ENCODE measurements at regions of chr19 and their contacts with region 1.

Region 1: GRCh38 chr19:29596885-29597525 is 9.1 kb upstream of the POP4 start:
- DNase-seq: no peak
- ATAC-seq: no peak
- H3K4me3 Mint-ChIP-seq: no peak overlapping the region
- H3K27ac Mint-ChIP-seq: no peak overlapping the region
- H3K4me1 Mint-ChIP-seq: peaks cover 2% of the 10 kb centered on the region
- H3K27me3 Mint-ChIP-seq: peaks cover 6% of the 10 kb centered on the region

Region 2: GRCh38 chr19:28823338-28823961 is 773.6 kb before region 1 on chr19:
- CTCF ChIA-PET with region 1: no interaction called
- POLR2A ChIA-PET with region 1: no interaction called
- intact Hi-C with region 1: no loop called
- DNase-seq: no peak
- ATAC-seq: no peak
- H3K4me3 Mint-ChIP-seq: no peak overlapping the region
- H3K27ac Mint-ChIP-seq: no peak overlapping the region
- H3K4me1 Mint-ChIP-seq: no peaks in the 10 kb centered on the region
- H3K27me3 Mint-ChIP-seq: no peaks in the 10 kb centered on the region

Region 3: GRCh38 chr19:29128203-29128602 is 468.8 kb before region 1 on chr19:
- CTCF ChIA-PET with region 1: no interaction called
- POLR2A ChIA-PET with region 1: no interaction called
- intact Hi-C with region 1: no loop called
- DNase-seq: no peak
- ATAC-seq: no peak
- H3K4me3 Mint-ChIP-seq: no peak overlapping the region
- H3K27ac Mint-ChIP-seq: no peak overlapping the region
- H3K4me1 Mint-ChIP-seq: no peaks in the 10 kb centered on the region
- H3K27me3 Mint-ChIP-seq: peaks cover 5% of the 10 kb centered on the region

Region 4: DNA sequence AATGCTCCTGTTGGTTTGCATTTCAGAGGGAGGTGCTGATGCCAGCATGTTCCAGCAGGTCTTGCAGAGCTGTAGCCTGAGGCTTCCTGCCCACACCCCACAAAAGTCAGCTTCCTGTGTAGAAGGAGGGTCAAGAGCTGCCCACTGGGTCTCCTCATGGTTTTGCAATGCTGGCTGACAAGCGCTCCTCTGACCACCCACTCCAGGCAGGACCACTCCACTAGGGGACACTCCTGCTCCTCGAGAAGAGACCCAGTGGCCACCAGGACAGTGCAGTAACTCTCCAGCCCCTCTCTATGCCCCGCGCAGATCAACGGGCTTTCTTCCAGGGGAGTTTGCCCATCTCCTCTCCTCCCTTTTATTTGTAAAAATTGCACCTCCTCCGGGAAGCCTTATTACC is 311.1 kb before region 1 on chr19:
- CTCF ChIA-PET with region 1: no interaction called
- POLR2A ChIA-PET with region 1: no interaction called
- intact Hi-C with region 1: loop called in 1 of 2 experiments (anchors 10 kb)
- DNase-seq: peak; percentile 15
- ATAC-seq: no peak
- H3K4me3 Mint-ChIP-seq: no peak overlapping the region
- H3K27ac Mint-ChIP-seq: no peak overlapping the region
- H3K4me1 Mint-ChIP-seq: no peaks in the 10 kb centered on the region
- H3K27me3 Mint-ChIP-seq: peaks cover 25% of the 10 kb centered on the region

Region 5: DNA sequence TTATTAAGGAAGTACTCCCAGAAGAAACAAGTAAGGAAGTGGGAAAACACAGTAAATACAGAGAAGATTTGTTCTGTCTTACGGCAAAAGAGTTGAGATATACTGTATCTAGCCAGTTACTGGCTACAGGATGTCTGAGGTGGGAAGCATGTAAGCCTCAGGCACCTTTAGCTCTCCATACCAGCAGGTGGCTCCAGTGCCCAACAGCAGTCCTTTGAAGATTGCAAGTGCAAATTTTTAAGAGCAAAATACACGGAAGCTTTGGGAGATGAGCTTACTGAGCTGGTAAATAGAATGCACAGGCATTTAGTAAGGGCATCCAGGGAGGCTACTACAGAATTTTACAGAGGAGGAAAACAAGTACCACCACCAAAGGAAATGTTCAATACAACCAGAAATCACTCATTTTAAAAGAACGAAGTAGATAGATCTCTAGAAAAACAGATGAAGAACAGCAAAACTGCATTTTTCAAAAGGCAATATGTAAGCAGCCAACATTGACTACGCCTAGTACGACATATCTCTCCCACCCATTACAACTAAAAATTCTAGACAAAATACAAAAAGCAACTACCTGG is 129.1 kb before region 1 on chr19:
- CTCF ChIA-PET with region 1: no interaction called
- POLR2A ChIA-PET with region 1: no interaction called
- intact Hi-C with region 1: loop called in 1 of 2 experiments (anchors 10 kb)
- DNase-seq: peak; percentile 55
- ATAC-seq: no peak
- H3K4me3 Mint-ChIP-seq: no peak overlapping the region
- H3K27ac Mint-ChIP-seq: no peak overlapping the region
- H3K4me1 Mint-ChIP-seq: no peaks in the 10 kb centered on the region
- H3K27me3 Mint-ChIP-seq: peaks cover 22% of the 10 kb centered on the region

Region 6: GRCh38 chr19:30325676-30326392 is 728.8 kb after region 1 on chr19:
- CTCF ChIA-PET with region 1: no interaction called
- POLR2A ChIA-PET with region 1: no interaction called
- intact Hi-C with region 1: no loop called
- DNase-seq: no peak
- ATAC-seq: no peak
- H3K4me3 Mint-ChIP-seq: no peak overlapping the region
- H3K27ac Mint-ChIP-seq: no peak overlapping the region
- H3K4me1 Mint-ChIP-seq: no peaks in the 10 kb centered on the region
- H3K27me3 Mint-ChIP-seq: peaks cover 5% of the 10 kb centered on the region

Measured in activated CD4-positive, alpha-beta T cell treated with anti-CD3 and anti-CD28 coated beads for 36 hours (primary cell).